Posterior vena cava (tissue), 2 donors: ENCODE measurements at regions of chr9 and their contacts with region 1.

Region 1: DNA sequence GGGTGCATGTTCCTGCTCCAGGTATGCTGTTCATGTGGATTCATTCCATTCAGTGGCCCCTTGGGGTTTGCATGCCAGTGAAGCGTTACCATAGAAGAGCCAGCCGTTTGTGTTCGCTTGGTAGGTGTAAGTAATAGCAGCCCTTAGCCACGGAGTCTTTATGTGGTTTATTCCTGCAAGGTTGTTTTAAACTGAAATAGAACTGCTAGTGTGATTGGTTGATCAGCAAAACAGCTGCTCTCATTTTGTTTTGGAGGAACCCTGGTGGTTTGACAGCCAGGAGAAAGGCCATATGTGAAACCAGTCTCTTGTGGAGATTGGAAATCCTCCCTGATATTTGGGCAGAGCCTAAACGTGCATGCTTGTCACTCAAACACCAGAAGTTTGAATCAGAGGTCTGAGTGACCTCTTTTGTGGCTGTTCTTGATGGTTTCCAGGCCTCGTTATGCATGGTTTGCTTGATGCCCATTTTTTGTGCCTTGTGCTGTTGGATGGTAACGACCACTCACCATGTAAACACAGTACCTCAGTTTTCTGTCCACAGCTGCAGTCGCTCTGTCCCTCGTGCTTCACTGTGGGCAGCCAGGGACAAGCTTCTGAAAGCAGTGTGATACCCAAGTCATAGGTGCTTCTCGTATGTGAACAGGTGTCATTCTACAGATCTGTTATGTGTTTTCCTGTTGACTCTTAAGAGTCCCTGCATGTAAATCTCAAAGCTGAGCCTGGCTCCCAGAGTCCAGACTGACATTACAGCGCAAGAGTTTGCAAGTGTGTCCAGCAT is 58.3 kb upstream of the NXNL2 start:
- DNase-seq: no peak

Region 2: GRCh38 chr9:88523056-88523455 is 46.4 kb after region 1 on chr9:
- intact Hi-C with region 1: loop called in 1 of 2 experiments (anchors 1 kb)
- DNase-seq: no peak